ENCODE measurements at regions of chr6 and their contacts with region 1.

Region 1: GRCh38 chr6:40328405-40328987 is 258.7 kb downstream of the LRFN2 start:
- DNase-seq: peak in 1 of 2 experiments; percentile 88
- H3K4me3 ChIP-seq: peak overlapping the region in 1 of 4 experiments; percentile 42; a peak in 1 of 8 replicates
- H3K27ac ChIP-seq: peak overlapping the region; percentile 25; the same call in 1 of the 2 replicates
- H3K4me1 ChIP-seq: peaks cover 12 to 29% (median 22%) of the 10 kb centered on the region in 4 experiments
- H3K27me3 ChIP-seq: no peaks in the 10 kb centered on the region; a peak in 1 of 7 replicates
- CTCF ChIP-seq: peak; percentile 88 to 99 (median 93)
- EP300 ChIP-seq: no peak
- POLR2A ChIP-seq: no peak
- RAD21 ChIP-seq: peak; percentile 94 to 98

Region 2: GRCh38 chr6:40256831-40257230 is 71.7 kb before region 1 on chr6:
- CTCF ChIA-PET with region 1: no interaction called
- POLR2A ChIA-PET with region 1: no interaction called
- DNase-seq: no peak
- H3K4me3 ChIP-seq: no peak overlapping the region
- H3K27ac ChIP-seq: no peak overlapping the region
- H3K4me1 ChIP-seq: peaks cover 0 to 3% (median 0%) of the 10 kb centered on the region in 4 experiments; a peak in 2 of 7 replicates
- H3K27me3 ChIP-seq: no peaks in the 10 kb centered on the region
- CTCF ChIP-seq: no peak
- EP300 ChIP-seq: no peak
- POLR2A ChIP-seq: no peak
- RAD21 ChIP-seq: no peak

Region 3: GRCh38 chr6:40308533-40309306 is 19.8 kb before region 1 on chr6:
- CTCF ChIA-PET with region 1: interaction called, 13 read pairs
- POLR2A ChIA-PET with region 1: interaction called, 3 read pairs
- DNase-seq: peak; percentile 29 to 98
- H3K4me3 ChIP-seq: no peak overlapping the region
- H3K27ac ChIP-seq: no peak overlapping the region
- H3K4me1 ChIP-seq: peaks cover 0 to 5% (median 1%) of the 10 kb centered on the region in 4 experiments; a peak in 2 of 7 replicates
- H3K27me3 ChIP-seq: no peaks in the 10 kb centered on the region
- CTCF ChIP-seq: peak; percentile 87 to 99 (median 89)
- EP300 ChIP-seq: no peak
- POLR2A ChIP-seq: no peak
- RAD21 ChIP-seq: peak; percentile 96

Region 4: GRCh38 chr6:40343877-40344565 is 15.5 kb after region 1 on chr6:
- CTCF ChIA-PET with region 1: interaction called, 88 read pairs
- POLR2A ChIA-PET with region 1: interaction called, 11 read pairs
- DNase-seq: peak in 1 of 2 experiments; percentile 48
- H3K4me3 ChIP-seq: no peak overlapping the region
- H3K27ac ChIP-seq: no peak overlapping the region
- H3K4me1 ChIP-seq: peaks cover 9 to 46% (median 30%) of the 10 kb centered on the region in 4 experiments
- H3K27me3 ChIP-seq: no peaks in the 10 kb centered on the region
- CTCF ChIP-seq: no peak
- EP300 ChIP-seq: no peak
- POLR2A ChIP-seq: no peak
- RAD21 ChIP-seq: no peak

Region 5: DNA sequence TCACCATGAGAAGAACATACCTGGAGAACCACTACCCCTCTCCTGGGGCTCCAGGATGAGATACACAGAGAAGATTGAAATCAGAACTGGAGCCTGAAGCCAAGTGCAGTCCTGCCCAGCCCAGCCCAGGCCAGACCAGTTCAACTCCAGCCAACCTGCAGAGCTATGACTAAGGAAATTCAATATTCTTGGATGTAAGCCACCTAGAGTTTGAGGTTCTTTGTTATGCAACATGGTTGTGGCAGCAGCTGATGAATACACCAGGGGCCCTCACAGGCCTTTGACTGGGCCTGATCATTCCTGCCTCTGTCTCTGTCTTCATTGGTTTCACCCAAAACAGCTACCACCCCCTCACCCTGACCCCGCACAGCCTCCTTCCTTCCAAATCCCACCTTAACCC is 90.9 kb after region 1 on chr6:
- CTCF ChIA-PET with region 1: interaction called, 30 read pairs
- POLR2A ChIA-PET with region 1: interaction called, 3 read pairs
- DNase-seq: no peak
- H3K4me3 ChIP-seq: peak overlapping the region in 1 of 4 experiments; percentile 31; a peak in 2 of 8 replicates
- H3K27ac ChIP-seq: peak overlapping the region; percentile 36
- H3K4me1 ChIP-seq: peaks cover 15 to 31% (median 21%) of the 10 kb centered on the region in 4 experiments
- H3K27me3 ChIP-seq: no peaks in the 10 kb centered on the region
- CTCF ChIP-seq: no peak
- EP300 ChIP-seq: no peak
- POLR2A ChIP-seq: no peak
- RAD21 ChIP-seq: peak in 1 of 2 experiments; percentile 24; a peak in 1 of 4 replicates

Region 6: GRCh38 chr6:40536442-40536841 is 207.9 kb after region 1 on chr6:
- CTCF ChIA-PET with region 1: interaction called, 12 read pairs
- POLR2A ChIA-PET with region 1: no interaction called
- DNase-seq: peak in 1 of 2 experiments; percentile 38
- H3K4me3 ChIP-seq: no peak overlapping the region
- H3K27ac ChIP-seq: no peak overlapping the region
- H3K4me1 ChIP-seq: peaks cover 0 to 8% (median 5%) of the 10 kb centered on the region in 4 experiments; a peak in 5 of 7 replicates
- H3K27me3 ChIP-seq: no peaks in the 10 kb centered on the region
- CTCF ChIP-seq: peak; percentile 70 to 73 (median 70)
- EP300 ChIP-seq: no peak
- POLR2A ChIP-seq: no peak
- RAD21 ChIP-seq: peak; percentile 47 to 69

Region 7: GRCh38 chr6:40587240-40588069 is 259.0 kb after region 1 on chr6 and contains the start of gene LRFN2:
- CTCF ChIA-PET with region 1: interaction called, 136 read pairs
- POLR2A ChIA-PET with region 1: interaction called, 4 read pairs
- DNase-seq: peak in 1 of 2 experiments; percentile 93
- H3K4me3 ChIP-seq: peak within 1 kb of the TSS; percentile 56 to 76 (median 72)
- H3K27ac ChIP-seq: no peak within 1 kb of the TSS
- H3K4me1 ChIP-seq: peaks cover 13 to 24% (median 19%) of the 10 kb centered on the region in 4 experiments
- H3K27me3 ChIP-seq: peaks cover 3 to 23% (median 19%) of the 10 kb centered on the region in 4 experiments; a peak in 6 of 7 replicates
- CTCF ChIP-seq: peak; percentile 70 to 91 (median 89)
- EP300 ChIP-seq: no peak
- POLR2A ChIP-seq: peak in 1 of 2 experiments; percentile 47; a peak in 1 of 3 replicates
- RAD21 ChIP-seq: peak; percentile 64 to 73
- total RNA-seq, gene LRFN2: 2.3 TPM in 2 replicates

Region 8: DNA sequence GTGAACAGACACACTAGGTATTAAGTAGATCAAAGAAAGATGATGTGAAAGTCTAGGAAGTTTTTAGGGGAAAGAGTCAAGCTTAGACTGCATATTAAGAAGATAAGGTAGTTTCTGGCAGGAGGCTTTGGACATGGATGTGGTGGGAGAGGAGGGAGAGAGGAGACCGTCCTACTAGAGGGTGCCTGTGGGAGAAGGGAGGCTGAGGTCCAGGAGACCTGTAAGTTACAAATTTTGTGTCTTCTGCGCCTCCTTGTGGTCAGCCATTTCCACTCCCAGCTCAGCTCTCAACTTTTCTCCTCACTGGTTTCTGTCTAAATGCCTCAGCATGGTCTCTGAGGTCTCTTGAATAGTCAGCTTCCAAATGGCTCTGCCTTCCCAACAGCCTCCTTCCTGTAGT is 517.1 kb after region 1 on chr6:
- CTCF ChIA-PET with region 1: interaction called, 10 read pairs
- POLR2A ChIA-PET with region 1: no interaction called
- DNase-seq: peak; percentile 25 to 73
- H3K4me3 ChIP-seq: no peak overlapping the region
- H3K27ac ChIP-seq: no peak overlapping the region
- H3K4me1 ChIP-seq: no peaks in the 10 kb centered on the region
- H3K27me3 ChIP-seq: no peaks in the 10 kb centered on the region
- CTCF ChIP-seq: peak; percentile 59 to 91 (median 79)
- EP300 ChIP-seq: no peak
- POLR2A ChIP-seq: no peak
- RAD21 ChIP-seq: peak; percentile 79 to 85